ENCODE measurements at regions of chr2 and their contacts with region 1.

Region 1: GRCh38 chr2:64234785-64235184 is 90.6 kb upstream of the PELI1 start:
- DNase-seq: no peak
- H3K4me3 ChIP-seq: no peak overlapping the region
- H3K27ac ChIP-seq: no peak overlapping the region
- H3K27me3 ChIP-seq: no peaks in the 10 kb centered on the region
- CTCF ChIP-seq: no peak

Region 2: GRCh38 chr2:64273524-64274398 is 39.0 kb after region 1 on chr2:
- intact Hi-C with region 1: loop called in 1 of 2 experiments (anchors 5 kb)
- DNase-seq: peak in 1 of 10 donors; percentile 34
- H3K4me3 ChIP-seq: peak overlapping the region in 40 of 59 donors; percentile 0 to 55 (median 28)
- H3K27ac ChIP-seq: peak overlapping the region in 58 of 59 donors; percentile 7 to 86 (median 70)
- H3K27me3 ChIP-seq: no peaks in the 10 kb centered on the region
- CTCF ChIP-seq: no peak